Ascending aorta (tissue), 2 donors: ENCODE measurements at regions of chr1 and their contacts with region 1.

Region 1: GRCh38 chr1:227318003-227318852 is at the start of gene CDC42BPA:
- DNase-seq: peak; percentile 16 to 89
- H3K4me3 ChIP-seq: peak within 1 kb of the TSS; percentile 95 to 97
- H3K27ac ChIP-seq: peak within 1 kb of the TSS; percentile 92 to 99
- H3K4me1 ChIP-seq: peaks cover 0 to 3% of the 10 kb centered on the region in 2 donors
- H3K27me3 ChIP-seq: no peaks in the 10 kb centered on the region
- CTCF ChIP-seq: no peak
- total RNA-seq, gene CDC42BPA: 56.9 TPM

Region 2: GRCh38 chr1:226940029-226940805 is 378.0 kb before region 1 on chr1 and contains the start of gene COQ8A:
- intact Hi-C with region 1: loop called (anchors 10 kb)
- DNase-seq: peak; percentile 96 to 99
- H3K4me3 ChIP-seq: peak within 1 kb of the TSS; percentile 91 to 93
- H3K27ac ChIP-seq: peak within 1 kb of the TSS; percentile 95 to 97
- H3K4me1 ChIP-seq: peaks cover 7 to 21% of the 10 kb centered on the region in 2 donors
- H3K27me3 ChIP-seq: no peaks in the 10 kb centered on the region
- CTCF ChIP-seq: no peak
- total RNA-seq, gene COQ8A: 42.4 TPM

Region 3: GRCh38 chr1:227285745-227286144 is 32.5 kb before region 1 on chr1:
- intact Hi-C with region 1: no loop called
- DNase-seq: no peak
- H3K4me3 ChIP-seq: no peak overlapping the region
- H3K27ac ChIP-seq: no peak overlapping the region
- H3K4me1 ChIP-seq: no peaks in the 10 kb centered on the region
- H3K27me3 ChIP-seq: no peaks in the 10 kb centered on the region
- CTCF ChIP-seq: no peak

Region 4: GRCh38 chr1:227305894-227306626 is 12.2 kb before region 1 on chr1:
- intact Hi-C with region 1: no loop called
- DNase-seq: no peak
- H3K4me3 ChIP-seq: no peak overlapping the region
- H3K27ac ChIP-seq: no peak overlapping the region
- H3K4me1 ChIP-seq: peaks cover 0 to 5% of the 10 kb centered on the region in 2 donors
- H3K27me3 ChIP-seq: no peaks in the 10 kb centered on the region
- CTCF ChIP-seq: no peak

Region 5: GRCh38 chr1:227437495-227438008 is 119.3 kb after region 1 on chr1:
- intact Hi-C with region 1: loop called (anchors 5 kb)
- DNase-seq: no peak
- H3K4me3 ChIP-seq: peak overlapping the region; percentile 27 to 61
- H3K27ac ChIP-seq: no peak overlapping the region
- H3K4me1 ChIP-seq: peaks cover 0 to 5% of the 10 kb centered on the region in 2 donors
- H3K27me3 ChIP-seq: no peaks in the 10 kb centered on the region
- CTCF ChIP-seq: peak; percentile 10 to 53 (median 23)

Region 6: GRCh38 chr1:227563324-227564201 is 245.3 kb after region 1 on chr1 and contains the start of gene ZNF678:
- intact Hi-C with region 1: loop called (anchors 5 kb)
- DNase-seq: peak; percentile 78 to 95
- H3K4me3 ChIP-seq: peak within 1 kb of the TSS; percentile 65 to 71
- H3K27ac ChIP-seq: peak within 1 kb of the TSS; percentile 68 to 80
- H3K4me1 ChIP-seq: peaks cover 0 to 6% of the 10 kb centered on the region in 2 donors
- H3K27me3 ChIP-seq: no peaks in the 10 kb centered on the region
- CTCF ChIP-seq: no peak
- total RNA-seq, gene ZNF678: 0.75 TPM